Right cardiac atrium (tissue), 5 donors: ENCODE measurements at regions of chr3 and their contacts with region 1.

Region 1: DNA sequence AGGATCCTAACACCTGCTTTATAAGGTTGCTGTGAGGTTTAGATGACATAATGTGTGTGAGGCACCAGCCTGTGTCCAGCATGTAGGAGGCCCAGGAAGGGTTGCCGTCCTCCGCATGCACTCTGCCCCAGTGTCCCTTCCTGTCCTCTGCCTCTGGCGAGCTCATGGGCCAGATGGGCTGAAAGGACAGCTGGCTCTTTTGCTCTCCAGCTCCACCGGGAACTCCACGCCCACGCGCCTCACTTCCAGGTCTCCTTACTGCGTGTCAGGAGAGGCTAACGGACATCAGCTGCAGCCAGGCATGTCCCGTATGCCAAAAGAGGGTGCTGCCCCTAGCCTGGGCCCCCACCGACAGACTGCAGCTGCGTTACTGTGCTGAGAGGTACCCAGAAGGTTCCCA is 12.2 kb downstream of the MUC20 start:
- DNase-seq: no peak
- ATAC-seq: peak; percentile 17 to 20
- H3K4me3 ChIP-seq: no peak overlapping the region
- H3K27ac ChIP-seq: no peak overlapping the region
- H3K4me1 ChIP-seq: no peaks in the 10 kb centered on the region
- H3K27me3 ChIP-seq: no peaks in the 10 kb centered on the region

Region 2: DNA sequence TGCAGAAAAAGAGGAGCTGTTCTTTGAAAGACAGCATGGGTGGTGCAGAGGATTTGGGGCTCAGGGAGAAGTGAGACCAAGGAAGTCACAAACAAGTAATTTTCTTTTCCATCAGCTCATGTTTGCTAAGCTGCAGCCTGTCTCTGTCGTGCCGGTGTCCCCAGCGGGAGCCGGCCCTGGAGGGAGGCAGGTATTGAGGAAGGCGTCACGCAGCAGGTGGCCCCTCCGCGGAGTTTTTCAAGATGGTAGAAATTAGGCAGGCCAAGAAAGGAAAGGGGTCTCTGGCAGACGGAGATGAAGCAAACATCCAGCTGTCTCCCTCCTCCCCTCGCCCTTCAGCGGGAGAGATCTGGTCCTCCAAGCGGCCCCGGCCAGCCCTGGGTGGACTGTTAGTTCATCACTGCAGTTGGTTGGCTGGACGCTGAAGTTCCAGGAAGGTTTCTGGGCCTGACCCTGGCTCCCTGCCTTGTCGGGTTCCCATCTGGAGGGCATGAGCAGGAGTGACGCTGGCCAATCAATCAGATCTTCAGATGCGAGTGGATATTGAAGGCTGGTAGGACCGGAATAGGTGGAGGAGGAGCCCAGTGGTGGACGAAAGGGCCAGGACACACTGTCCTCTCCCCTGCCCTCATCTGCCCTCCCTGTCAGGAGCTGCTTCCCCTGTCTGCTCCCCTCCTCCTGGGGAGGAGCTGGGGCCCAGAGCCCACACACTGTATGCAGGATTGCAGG is 106.5 kb after region 1 on chr3:
- intact Hi-C with region 1: loop called in 1 of 4 experiments (anchors 10 kb)
- DNase-seq: no peak
- ATAC-seq: peak in 1 of 2 donors; percentile 41
- H3K4me3 ChIP-seq: no peak overlapping the region
- H3K27ac ChIP-seq: no peak overlapping the region
- H3K4me1 ChIP-seq: no peaks in the 10 kb centered on the region
- H3K27me3 ChIP-seq: no peaks in the 10 kb centered on the region